ENCODE measurements at regions of chr13 and their contacts with region 1.

Region 1: GRCh38 chr13:28138012-28138755 is at the start of gene PAN3:
- DNase-seq: peak; percentile 88 to 92 (median 91)
- ATAC-seq: peak; percentile 73
- H3K4me3 ChIP-seq: peak within 1 kb of the TSS; percentile 56
- H3K4me3 Mint-ChIP-seq: peak within 1 kb of the TSS; percentile 90 to 99 (median 96)
- H3K27ac ChIP-seq: peak within 1 kb of the TSS; percentile 99
- H3K27ac Mint-ChIP-seq: peak within 1 kb of the TSS; percentile 96 to 99 (median 98)
- H3K4me1 ChIP-seq: peaks cover 24% of the 10 kb centered on the region in 2 donors
- H3K4me1 Mint-ChIP-seq: peaks cover 43 to 52% (median 47%) of the 10 kb centered on the region in 7 donors
- H3K27me3 ChIP-seq: no peaks in the 10 kb centered on the region
- H3K27me3 Mint-ChIP-seq: peaks cover 0 to 2% (median 0%) of the 10 kb centered on the region in 5 donors
- total RNA-seq, gene PAN3: 49.9 to 82.5 (median 76.4) TPM

Region 2: GRCh38 chr13:26221721-26222519 is 1916.3 kb before region 1 on chr13 and contains the start of gene RNF6:
- CTCF ChIA-PET with region 1: no interaction called
- POLR2A ChIA-PET with region 1: no interaction called
- intact Hi-C with region 1: loop called in 1 of 2 experiments (anchors 2 kb)
- DNase-seq: peak; percentile 83 to 92 (median 89)
- ATAC-seq: peak; percentile 95
- H3K4me3 ChIP-seq: peak within 1 kb of the TSS; percentile 96
- H3K4me3 Mint-ChIP-seq: peak within 1 kb of the TSS; percentile 95 to 100 (median 100)
- H3K27ac ChIP-seq: peak within 1 kb of the TSS; percentile 97
- H3K27ac Mint-ChIP-seq: peak within 1 kb of the TSS; percentile 93 to 100 (median 100)
- H3K4me1 ChIP-seq: peaks cover 16 to 17% of the 10 kb centered on the region in 2 donors
- H3K4me1 Mint-ChIP-seq: peaks cover 25 to 54% (median 49%) of the 10 kb centered on the region in 7 donors
- H3K27me3 ChIP-seq: no peaks in the 10 kb centered on the region
- H3K27me3 Mint-ChIP-seq: peaks cover 0 to 3% (median 0%) of the 10 kb centered on the region in 5 donors
- total RNA-seq, gene RNF6: 31.0 to 45.6 (median 44.6) TPM

Region 3: GRCh38 chr13:27251166-27252091 is 886.8 kb before region 1 on chr13 and contains the start of gene RPL21:
- CTCF ChIA-PET with region 1: no interaction called
- POLR2A ChIA-PET with region 1: no interaction called
- intact Hi-C with region 1: loop called (anchors 1 kb)
- DNase-seq: peak; percentile 85 to 95 (median 93)
- ATAC-seq: peak; percentile 95
- H3K4me3 ChIP-seq: peak within 1 kb of the TSS; percentile 82
- H3K4me3 Mint-ChIP-seq: peak within 1 kb of the TSS; percentile 93 to 99 (median 98)
- H3K27ac ChIP-seq: peak within 1 kb of the TSS; percentile 98
- H3K27ac Mint-ChIP-seq: peak within 1 kb of the TSS; percentile 98 to 100 (median 99)
- H3K4me1 ChIP-seq: peaks cover 29 to 35% of the 10 kb centered on the region in 2 donors
- H3K4me1 Mint-ChIP-seq: peaks cover 32 to 78% (median 49%) of the 10 kb centered on the region in 7 donors
- H3K27me3 ChIP-seq: no peaks in the 10 kb centered on the region
- H3K27me3 Mint-ChIP-seq: no peaks in the 10 kb centered on the region
- total RNA-seq, gene RPL21: 962 to 2,668 (median 2,384) TPM

Region 4: DNA sequence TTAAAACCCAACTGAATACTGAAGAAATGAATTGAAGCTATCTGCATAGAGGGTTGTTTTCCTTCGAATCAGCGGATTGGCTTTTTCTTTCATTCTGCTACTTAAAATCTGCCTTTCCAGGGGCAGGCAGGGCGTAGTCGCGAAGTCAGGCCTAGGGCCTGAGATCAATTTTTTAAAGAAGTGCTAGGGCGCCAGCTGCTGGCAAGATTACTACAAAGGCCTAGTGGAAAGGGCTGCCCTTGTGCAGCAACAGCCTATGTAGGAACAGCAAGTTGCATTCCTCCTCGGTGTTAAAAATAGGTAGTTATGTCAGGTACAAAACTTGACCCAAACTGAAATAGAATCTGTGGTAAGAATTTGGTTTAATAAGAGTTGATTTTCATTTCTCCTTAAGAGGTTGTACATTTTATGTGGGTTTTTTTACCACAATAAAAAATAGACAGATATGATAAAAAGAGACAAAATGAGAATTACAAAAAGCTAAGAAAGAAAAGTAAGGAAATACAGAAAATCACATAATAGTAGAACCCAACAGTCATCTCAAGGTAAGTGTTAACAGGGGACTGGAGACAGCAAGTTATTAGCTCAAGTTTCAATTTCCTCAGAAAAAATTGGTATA is 140.2 kb before region 1 on chr13:
- CTCF ChIA-PET with region 1: no interaction called
- POLR2A ChIA-PET with region 1: no interaction called
- intact Hi-C with region 1: loop called in 1 of 2 experiments (anchors 5 kb)
- DNase-seq: peak in 4 of 9 donors; percentile 7 to 18 (median 13)
- ATAC-seq: no peak
- H3K4me3 ChIP-seq: no peak overlapping the region
- H3K4me3 Mint-ChIP-seq: no peak overlapping the region
- H3K27ac ChIP-seq: no peak overlapping the region
- H3K27ac Mint-ChIP-seq: peak overlapping the region in 5 of 9 donors; percentile 14 to 72 (median 31)
- H3K4me1 ChIP-seq: no peaks in the 10 kb centered on the region
- H3K4me1 Mint-ChIP-seq: peaks cover 0 to 7% (median 6%) of the 10 kb centered on the region in 7 donors
- H3K27me3 ChIP-seq: no peaks in the 10 kb centered on the region
- H3K27me3 Mint-ChIP-seq: peaks cover 0 to 6% (median 0%) of the 10 kb centered on the region in 5 donors

Region 5: DNA sequence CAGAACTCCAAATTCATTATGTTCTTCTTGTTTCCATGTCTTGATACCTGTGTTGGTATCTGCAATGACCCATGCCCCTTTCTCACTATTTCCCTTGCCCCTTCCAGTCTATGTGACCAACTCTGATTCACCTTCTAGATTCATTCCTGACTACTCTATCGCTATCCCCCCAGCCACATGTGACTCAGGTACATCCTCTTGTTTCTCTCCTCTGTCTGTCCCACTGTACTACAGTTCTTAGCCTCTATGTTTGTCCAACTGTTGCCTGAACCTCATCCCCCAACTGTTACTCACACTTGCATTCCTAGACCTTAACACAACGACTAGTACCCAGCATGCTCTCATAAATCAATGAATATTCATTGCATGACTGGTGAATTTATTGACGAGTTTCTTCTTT is 27.8 kb before region 1 on chr13:
- CTCF ChIA-PET with region 1: no interaction called
- POLR2A ChIA-PET with region 1: no interaction called
- intact Hi-C with region 1: no loop called
- DNase-seq: no peak
- ATAC-seq: no peak
- H3K4me3 ChIP-seq: no peak overlapping the region
- H3K4me3 Mint-ChIP-seq: no peak overlapping the region
- H3K27ac ChIP-seq: no peak overlapping the region
- H3K27ac Mint-ChIP-seq: no peak overlapping the region
- H3K4me1 ChIP-seq: no peaks in the 10 kb centered on the region
- H3K4me1 Mint-ChIP-seq: no peaks in the 10 kb centered on the region
- H3K27me3 ChIP-seq: no peaks in the 10 kb centered on the region
- H3K27me3 Mint-ChIP-seq: peaks cover 0 to 14% (median 0%) of the 10 kb centered on the region in 5 donors

Region 6: DNA sequence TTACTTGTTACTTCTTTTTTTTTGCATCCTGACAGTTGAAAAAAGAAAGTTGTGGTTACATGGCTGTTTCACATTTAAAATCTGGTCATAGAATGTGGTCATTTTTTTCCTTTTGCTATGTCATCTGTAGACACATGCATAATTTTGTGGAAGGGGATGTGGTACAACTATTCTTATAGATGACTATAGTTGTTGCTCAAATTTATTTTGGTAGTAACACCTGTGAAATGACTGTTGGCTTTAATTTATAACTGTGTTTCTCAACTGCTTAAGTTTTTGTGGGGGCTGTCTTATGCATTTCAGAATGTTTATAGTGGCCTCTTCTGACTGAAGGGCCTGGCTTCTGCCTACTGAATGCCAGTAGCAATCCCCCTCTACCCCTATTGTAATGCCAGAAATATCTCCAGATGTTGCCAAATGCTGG is 130.6 kb after region 1 on chr13:
- CTCF ChIA-PET with region 1: no interaction called
- POLR2A ChIA-PET with region 1: no interaction called
- intact Hi-C with region 1: loop called (anchors 1 to 5 kb)
- DNase-seq: no peak
- ATAC-seq: peak; percentile 67
- H3K4me3 ChIP-seq: no peak overlapping the region
- H3K4me3 Mint-ChIP-seq: peak overlapping the region in 1 of 10 donors; percentile 51
- H3K27ac ChIP-seq: no peak overlapping the region
- H3K27ac Mint-ChIP-seq: peak overlapping the region in 4 of 9 donors; percentile 21 to 59 (median 40)
- H3K4me1 ChIP-seq: no peaks in the 10 kb centered on the region
- H3K4me1 Mint-ChIP-seq: peaks cover 0 to 17% (median 6%) of the 10 kb centered on the region in 7 donors
- H3K27me3 ChIP-seq: no peaks in the 10 kb centered on the region
- H3K27me3 Mint-ChIP-seq: no peaks in the 10 kb centered on the region

Region 7: GRCh38 chr13:28636674-28637317 is 498.6 kb after region 1 on chr13:
- CTCF ChIA-PET with region 1: no interaction called
- POLR2A ChIA-PET with region 1: no interaction called
- intact Hi-C with region 1: loop called in 1 of 2 experiments (anchors 1 kb)
- DNase-seq: peak in 8 of 9 donors; percentile 25 to 66 (median 58)
- ATAC-seq: peak; percentile 78
- H3K4me3 ChIP-seq: no peak overlapping the region
- H3K4me3 Mint-ChIP-seq: peak overlapping the region; percentile 1 to 65 (median 34)
- H3K27ac ChIP-seq: no peak overlapping the region
- H3K27ac Mint-ChIP-seq: peak overlapping the region in 5 of 9 donors; percentile 3 to 49 (median 13)
- H3K4me1 ChIP-seq: peaks cover 0 to 7% of the 10 kb centered on the region in 2 donors
- H3K4me1 Mint-ChIP-seq: peaks cover 0 to 8% (median 7%) of the 10 kb centered on the region in 7 donors
- H3K27me3 ChIP-seq: no peaks in the 10 kb centered on the region
- H3K27me3 Mint-ChIP-seq: peaks cover 5 to 24% (median 17%) of the 10 kb centered on the region in 5 donors

Region 8: DNA sequence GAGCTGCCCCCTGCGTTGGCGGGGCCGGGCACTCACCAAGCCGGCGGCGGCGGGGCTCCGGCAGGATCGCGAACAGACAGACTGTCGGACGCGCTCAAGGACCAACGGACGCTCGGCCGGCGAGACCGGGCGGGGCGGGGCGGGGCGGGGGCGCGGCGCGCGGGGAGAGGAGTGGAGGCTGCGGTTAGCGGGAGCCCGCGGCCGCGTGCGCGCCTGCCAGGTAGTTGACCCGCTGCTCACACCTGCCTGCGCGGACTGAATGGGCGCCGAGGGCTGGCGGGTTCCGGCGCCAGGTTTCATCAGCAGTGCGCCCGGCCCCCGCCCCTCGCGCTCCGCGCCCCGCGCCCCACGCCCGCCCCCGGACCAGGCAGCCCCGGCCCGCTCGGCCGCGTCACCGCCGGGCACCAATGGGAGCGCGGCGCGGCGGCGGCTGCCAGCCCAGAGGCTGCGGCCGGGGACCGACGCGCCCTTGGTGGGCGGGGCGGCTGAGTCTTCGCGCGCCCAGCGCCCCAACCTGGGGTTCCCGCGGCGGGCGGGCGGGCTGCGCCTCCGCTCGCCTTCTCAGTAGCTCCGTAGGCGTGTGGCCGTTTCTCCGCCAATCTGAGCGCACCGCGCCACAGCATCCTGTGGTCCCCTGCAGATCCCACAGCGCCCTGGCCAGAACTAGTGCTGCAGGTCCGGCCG is 1457.3 kb after region 1 on chr13 and contains the start of gene SLC7A1:
- CTCF ChIA-PET with region 1: no interaction called
- POLR2A ChIA-PET with region 1: no interaction called
- intact Hi-C with region 1: loop called in 1 of 2 experiments (anchors 2 kb)
- DNase-seq: peak; percentile 74 to 93 (median 85)
- ATAC-seq: peak; percentile 95
- H3K4me3 ChIP-seq: peak within 1 kb of the TSS; percentile 73
- H3K4me3 Mint-ChIP-seq: peak within 1 kb of the TSS; percentile 88 to 94 (median 90)
- H3K27ac ChIP-seq: peak within 1 kb of the TSS; percentile 82
- H3K27ac Mint-ChIP-seq: peak within 1 kb of the TSS; percentile 74 to 96 (median 87)
- H3K4me1 ChIP-seq: peaks cover 6 to 7% of the 10 kb centered on the region in 2 donors
- H3K4me1 Mint-ChIP-seq: peaks cover 26 to 49% (median 43%) of the 10 kb centered on the region in 7 donors
- H3K27me3 ChIP-seq: no peaks in the 10 kb centered on the region
- H3K27me3 Mint-ChIP-seq: peaks cover 0 to 3% (median 2%) of the 10 kb centered on the region in 5 donors
- total RNA-seq, gene SLC7A1: 12.2 to 63.8 (median 28.2) TPM

Measured in naive thymus-derived CD4-positive, alpha-beta T cell (primary cell).